ENCODE measurements at regions of chr2 and their contacts with region 1.

Region 1: DNA sequence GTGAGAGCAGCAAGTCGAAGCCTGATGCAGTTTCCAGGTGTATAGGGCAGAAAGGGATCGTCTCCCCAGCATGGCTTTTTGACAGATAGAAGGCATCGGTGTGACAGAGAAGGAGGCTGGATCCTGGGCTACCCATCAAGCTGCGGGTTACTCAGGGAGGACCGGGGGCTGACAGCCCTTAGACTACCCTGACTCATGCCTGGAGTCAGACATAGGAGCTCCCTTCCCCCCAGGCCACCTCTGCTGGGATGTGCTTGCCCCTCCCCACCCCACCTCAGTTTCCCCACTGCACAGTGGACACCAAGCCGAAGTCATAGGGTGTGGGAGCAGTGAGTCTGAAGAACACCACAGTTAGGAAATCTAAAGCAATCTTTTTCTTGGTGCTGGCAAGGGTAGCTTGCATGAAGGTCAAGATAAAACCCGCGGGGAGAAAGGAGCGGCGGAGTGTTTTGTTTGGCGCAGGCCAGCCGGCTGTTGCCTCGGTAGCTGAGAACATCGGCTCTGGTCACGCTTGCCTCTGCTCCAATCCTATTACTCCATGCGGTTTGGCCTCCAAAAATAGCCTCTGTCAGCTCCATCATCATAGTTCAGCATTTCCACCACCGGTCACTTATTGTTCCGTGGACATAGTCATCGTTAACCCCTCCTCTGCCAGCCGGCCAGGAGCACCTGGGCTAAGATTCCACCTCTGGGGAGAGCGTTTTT is 169.2 kb upstream of the GLI2 start:
- DNase-seq: no peak
- ATAC-seq: no peak
- H3K4me3 ChIP-seq: no peak overlapping the region
- H3K27ac ChIP-seq: no peak overlapping the region
- H3K4me1 ChIP-seq: peaks cover 57% of the 10 kb centered on the region
- H3K27me3 ChIP-seq: peaks cover 38 to 88% of the 10 kb centered on the region in 2 experiments
- CTCF ChIP-seq: no peak
- EP300 ChIP-seq: no peak
- POLR2A ChIP-seq: no peak
- RAD21 ChIP-seq: no peak

Region 2: GRCh38 chr2:120619579-120619978 is 53.1 kb after region 1 on chr2:
- CTCF ChIA-PET with region 1: no interaction called
- POLR2A ChIA-PET with region 1: no interaction called
- in situ Hi-C with region 1: no loop called
- intact Hi-C with region 1: loop called (anchors 1 kb)
- DNase-seq: peak; percentile 89
- ATAC-seq: peak; percentile 96
- H3K4me3 ChIP-seq: no peak overlapping the region
- H3K27ac ChIP-seq: no peak overlapping the region
- H3K4me1 ChIP-seq: peaks cover 23% of the 10 kb centered on the region
- H3K27me3 ChIP-seq: peaks cover 3 to 34% of the 10 kb centered on the region in 2 experiments; a peak in 4 of 5 replicates
- CTCF ChIP-seq: no peak
- EP300 ChIP-seq: peak in 1 of 2 experiments; percentile 27; a peak in 1 of 4 replicates
- POLR2A ChIP-seq: no peak
- RAD21 ChIP-seq: no peak

Region 3: GRCh38 chr2:120765678-120766395 is 199.4 kb after region 1 on chr2:
- CTCF ChIA-PET with region 1: no interaction called
- POLR2A ChIA-PET with region 1: no interaction called
- in situ Hi-C with region 1: no loop called
- intact Hi-C with region 1: no loop called
- DNase-seq: no peak
- ATAC-seq: no peak
- H3K4me3 ChIP-seq: no peak overlapping the region
- H3K27ac ChIP-seq: no peak overlapping the region
- H3K4me1 ChIP-seq: no peaks in the 10 kb centered on the region
- H3K27me3 ChIP-seq: peaks cover 18 to 95% of the 10 kb centered on the region in 2 experiments; a peak in 4 of 5 replicates
- CTCF ChIP-seq: no peak
- EP300 ChIP-seq: no peak
- POLR2A ChIP-seq: no peak
- RAD21 ChIP-seq: no peak